ENCODE measurements at regions of chr11 and their contacts with region 1.

Region 1: GRCh38 chr11:62508268-62509058 is 38.1 kb downstream of the AHNAK start:
- DNase-seq: peak; percentile 84
- H3K4me3 ChIP-seq: peak overlapping the region in 1 of 2 donors; percentile 15
- H3K27ac ChIP-seq: peak overlapping the region; percentile 75 to 91
- H3K4me1 ChIP-seq: peaks cover 22% of the 10 kb centered on the region
- H3K27me3 ChIP-seq: no peaks in the 10 kb centered on the region
- CTCF ChIP-seq: peak in 3 of 4 experiments; percentile 40 to 73 (median 63)
- POLR2A ChIP-seq: no peak

Region 2: GRCh38 chr11:62445314-62445740 is 63.1 kb before region 1 on chr11:
- intact Hi-C with region 1: loop called (anchors 5 kb)
- DNase-seq: peak; percentile 66
- H3K4me3 ChIP-seq: no peak overlapping the region
- H3K27ac ChIP-seq: peak overlapping the region; percentile 57 to 73
- H3K4me1 ChIP-seq: peaks cover 10% of the 10 kb centered on the region
- H3K27me3 ChIP-seq: no peaks in the 10 kb centered on the region
- CTCF ChIP-seq: no peak
- POLR2A ChIP-seq: no peak